GM12878 (cell line): ENCODE measurements at regions of chr4 and their contacts with region 1.

Region 1: GRCh38 chr4:67746797-67747495 is 7.2 kb downstream of the GNRHR start:
- DNase-seq: peak; percentile 13
- ATAC-seq: peak; percentile 56
- H3K4me3 ChIP-seq: no peak overlapping the region
- H3K27ac ChIP-seq: no peak overlapping the region
- H3K4me1 ChIP-seq: no peaks in the 10 kb centered on the region
- H3K27me3 ChIP-seq: no peaks in the 10 kb centered on the region
- CTCF ChIP-seq: peak in 2 of 3 experiments; percentile 51 to 52; a peak in 3 of 6 replicates
- EP300 ChIP-seq: no peak
- POLR2A ChIP-seq: no peak
- RAD21 ChIP-seq: peak; percentile 43; the same call in 1 of the 2 replicates

Region 2: DNA sequence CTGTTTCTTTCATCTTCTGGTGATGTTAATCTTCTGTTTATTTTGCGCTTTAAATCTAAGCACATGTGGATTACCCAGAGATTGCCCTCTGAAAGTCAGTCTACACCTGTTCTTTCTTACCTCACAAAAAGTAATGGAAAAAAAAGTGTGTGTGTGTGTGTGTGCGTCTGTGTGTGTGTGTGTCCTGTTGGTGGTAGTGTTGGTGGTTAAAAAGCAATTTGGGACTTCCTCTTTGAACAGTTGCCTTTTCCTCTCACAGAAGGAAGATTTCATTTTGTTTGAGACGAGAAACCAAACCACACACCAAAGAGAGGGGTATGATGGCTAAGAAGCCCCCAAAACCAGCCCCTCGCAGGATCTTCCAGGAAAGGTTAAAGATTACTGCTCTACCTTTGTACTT is 188.5 kb before region 1 on chr4 and contains the start of gene STAP1:
- CTCF ChIA-PET with region 1: interaction called, 60 read pairs
- POLR2A ChIA-PET with region 1: no interaction called
- RAD21 ChIA-PET with region 1: interaction called, 6 read pairs
- SMC1A ChIA-PET with region 1: interaction called, 12 read pairs
- in situ Hi-C with region 1: no loop called
- intact Hi-C with region 1: no loop called
- DNase-seq: no peak
- ATAC-seq: peak; percentile 76
- H3K4me3 ChIP-seq: peak within 1 kb of the TSS; percentile 55
- H3K27ac ChIP-seq: peak within 1 kb of the TSS; percentile 38; the same call in 1 of the 2 replicates
- H3K4me1 ChIP-seq: no peaks in the 10 kb centered on the region; the same call in 1 of the 2 replicates
- H3K27me3 ChIP-seq: no peaks in the 10 kb centered on the region
- CTCF ChIP-seq: peak in 1 of 3 experiments; percentile 34; a peak in 2 of 6 replicates
- EP300 ChIP-seq: peak; percentile 24 to 71; a peak in 2 of 4 replicates
- POLR2A ChIP-seq: no peak
- RAD21 ChIP-seq: peak; percentile 38; the same call in 1 of the 2 replicates
- polyA plus RNA-seq, gene STAP1: 16.3 to 19.4 TPM

Region 3: DNA sequence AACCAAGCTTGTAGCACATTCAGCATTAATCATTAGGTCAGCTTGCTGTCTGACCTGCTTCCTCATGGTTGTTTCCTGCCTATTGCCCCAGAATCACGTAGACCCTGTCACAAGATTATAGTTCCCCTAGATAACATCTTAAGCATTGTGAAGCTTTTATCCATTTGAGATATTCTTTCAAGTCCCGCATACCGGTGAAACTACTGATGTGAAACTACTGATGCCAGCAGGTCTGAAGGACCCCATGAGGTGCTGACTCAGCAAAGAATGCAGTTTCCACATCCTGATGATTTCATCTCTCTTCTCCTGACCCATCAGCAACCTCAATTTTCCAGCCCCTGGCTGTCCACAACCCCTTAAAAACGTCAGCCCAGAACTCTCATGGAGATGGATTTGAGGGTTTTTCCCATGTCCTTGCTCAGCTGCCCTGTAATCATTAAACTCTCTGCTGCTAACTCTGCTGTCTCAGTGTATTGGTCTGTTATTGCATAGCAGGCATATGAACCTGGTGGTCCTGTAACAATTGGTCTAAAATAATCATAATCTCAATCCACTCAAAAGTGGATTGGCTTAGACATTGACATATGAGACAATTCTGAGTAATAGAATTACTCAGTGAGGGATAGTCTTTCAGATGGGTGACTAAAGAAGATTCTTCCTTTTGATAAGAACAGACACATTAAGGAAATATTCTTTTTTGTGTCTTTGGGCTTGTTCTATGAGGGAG is 19.7 kb before region 1 on chr4:
- CTCF ChIA-PET with region 1: interaction called, 40 read pairs
- POLR2A ChIA-PET with region 1: no interaction called
- RAD21 ChIA-PET with region 1: interaction called, 3 read pairs
- SMC1A ChIA-PET with region 1: interaction called, 5 read pairs
- in situ Hi-C with region 1: no loop called
- intact Hi-C with region 1: no loop called
- DNase-seq: no peak
- ATAC-seq: no peak
- H3K4me3 ChIP-seq: no peak overlapping the region
- H3K27ac ChIP-seq: no peak overlapping the region
- H3K4me1 ChIP-seq: no peaks in the 10 kb centered on the region
- H3K27me3 ChIP-seq: no peaks in the 10 kb centered on the region
- CTCF ChIP-seq: no peak
- EP300 ChIP-seq: no peak
- POLR2A ChIP-seq: no peak
- RAD21 ChIP-seq: no peak

Region 4: GRCh38 chr4:67762086-67762485 is 15.1 kb after region 1 on chr4:
- CTCF ChIA-PET with region 1: interaction called, 94 read pairs
- POLR2A ChIA-PET with region 1: no interaction called
- RAD21 ChIA-PET with region 1: interaction called, 8 read pairs
- SMC1A ChIA-PET with region 1: interaction called, 10 read pairs
- in situ Hi-C with region 1: no loop called
- intact Hi-C with region 1: no loop called
- DNase-seq: peak; percentile 45
- ATAC-seq: peak; percentile 100
- H3K4me3 ChIP-seq: no peak overlapping the region
- H3K27ac ChIP-seq: 0 out of 2 replicates have a peak overlapping the region, but pooled peaks have one; percentile 13
- H3K4me1 ChIP-seq: no peaks in the 10 kb centered on the region
- H3K27me3 ChIP-seq: no peaks in the 10 kb centered on the region
- CTCF ChIP-seq: no peak
- EP300 ChIP-seq: no peak
- POLR2A ChIP-seq: no peak
- RAD21 ChIP-seq: no peak

Region 5: DNA sequence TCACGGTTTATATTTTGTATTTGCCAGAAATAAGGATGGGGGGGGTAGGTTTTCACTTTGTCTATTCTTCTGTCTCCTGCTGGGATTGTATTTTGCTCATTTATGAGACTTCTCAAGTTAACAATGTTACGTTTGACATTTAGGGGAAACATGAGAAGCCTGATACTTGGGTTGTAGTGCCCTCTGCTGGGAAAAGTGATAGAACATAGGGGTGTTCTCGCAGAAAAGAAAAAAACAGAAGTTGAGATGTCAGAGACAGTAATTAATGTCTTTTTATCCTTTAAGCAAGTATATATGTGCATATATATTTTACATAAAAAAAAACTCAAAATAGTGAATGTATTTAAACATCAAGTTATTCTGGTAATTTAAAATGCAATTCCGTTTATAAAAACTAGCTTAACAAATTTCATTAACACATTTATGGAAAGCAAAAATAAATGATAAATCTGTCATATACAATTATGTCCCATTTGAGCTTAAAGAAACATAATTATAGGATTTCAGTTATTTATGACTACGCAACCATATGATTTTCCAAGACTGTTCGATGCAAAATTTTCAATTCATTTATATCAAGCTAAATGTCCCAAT is 428.7 kb after region 1 on chr4:
- CTCF ChIA-PET with region 1: interaction called, 8 read pairs
- POLR2A ChIA-PET with region 1: no interaction called
- RAD21 ChIA-PET with region 1: interaction called, 4 read pairs
- SMC1A ChIA-PET with region 1: interaction called, 6 read pairs
- in situ Hi-C with region 1: no loop called
- intact Hi-C with region 1: loop called (anchors 10 kb)
- DNase-seq: peak; percentile 20
- ATAC-seq: peak; percentile 88
- H3K4me3 ChIP-seq: no peak overlapping the region
- H3K27ac ChIP-seq: no peak overlapping the region
- H3K4me1 ChIP-seq: no peaks in the 10 kb centered on the region
- H3K27me3 ChIP-seq: no peaks in the 10 kb centered on the region
- CTCF ChIP-seq: peak; percentile 55 to 73 (median 67)
- EP300 ChIP-seq: no peak
- POLR2A ChIP-seq: no peak
- RAD21 ChIP-seq: peak; percentile 90